ENCODE measurements at regions of chrX and their contacts with region 1.

Region 1: GRCh38 chrX:154458114-154458953 is at the start of gene PLXNA3:
- DNase-seq: peak; percentile 86
- ATAC-seq: peak; percentile 79
- H3K4me3 ChIP-seq: peak within 1 kb of the TSS; percentile 23 to 69 (median 61)
- H3K4me3 Mint-ChIP-seq: peak within 1 kb of the TSS; percentile 95
- H3K27ac ChIP-seq: peak within 1 kb of the TSS; percentile 24 to 66
- H3K27ac Mint-ChIP-seq: peak within 1 kb of the TSS; percentile 96
- H3K4me1 ChIP-seq: peaks cover 6 to 18% of the 10 kb centered on the region in 2 donors
- H3K4me1 Mint-ChIP-seq: peaks cover 14% of the 10 kb centered on the region
- H3K27me3 ChIP-seq: no peaks in the 10 kb centered on the region
- H3K27me3 Mint-ChIP-seq: no peaks in the 10 kb centered on the region
- CTCF ChIP-seq: no peak
- total RNA-seq, gene PLXNA3: 114 and 120 TPM in 2 replicates

Region 2: DNA sequence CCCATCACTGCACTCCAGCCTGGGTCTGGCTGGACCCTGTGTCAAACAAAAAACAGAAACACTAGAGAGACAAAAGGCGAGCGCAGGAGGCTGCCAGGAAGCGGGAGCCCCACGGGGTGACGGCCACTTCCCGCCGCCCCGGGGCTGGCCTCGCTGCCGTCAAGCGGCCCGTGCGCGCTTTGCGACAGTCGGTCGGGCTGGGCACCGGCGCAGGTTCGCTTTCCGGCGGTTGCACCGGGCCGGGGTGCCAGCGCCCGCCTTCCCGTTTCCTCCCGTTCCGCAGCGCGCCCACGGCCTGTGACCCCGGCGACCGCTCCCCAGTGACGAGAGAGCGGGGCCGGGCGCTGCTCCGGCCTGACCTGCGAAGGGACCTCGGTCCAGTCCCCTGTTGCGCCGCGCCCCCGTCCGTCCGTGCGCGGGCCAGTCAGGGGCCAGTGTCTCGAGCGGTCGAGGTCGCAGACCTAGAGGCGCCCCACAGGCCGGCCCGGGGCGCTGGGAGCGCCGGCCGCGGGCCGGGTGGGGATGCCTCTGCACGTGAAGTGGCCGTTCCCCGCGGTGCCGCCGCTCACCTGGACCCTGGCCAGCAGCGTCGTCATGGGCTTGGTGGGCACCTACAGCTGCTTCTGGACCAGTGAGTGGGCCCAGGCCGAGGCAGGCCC is 46.9 kb before region 1 on chrX and contains the start of gene TAFAZZIN:
- CTCF ChIA-PET with region 1: no interaction called
- POLR2A ChIA-PET with region 1: interaction called, 7 read pairs
- intact Hi-C with region 1: loop called (anchors 5 kb)
- DNase-seq: peak; percentile 77
- ATAC-seq: peak; percentile 66
- H3K4me3 ChIP-seq: peak within 1 kb of the TSS in 4 of 5 experiments; percentile 59 to 79 (median 70)
- H3K4me3 Mint-ChIP-seq: peak within 1 kb of the TSS; percentile 90
- H3K27ac ChIP-seq: peak within 1 kb of the TSS; percentile 73 to 79
- H3K27ac Mint-ChIP-seq: peak within 1 kb of the TSS; percentile 90
- H3K4me1 ChIP-seq: peaks cover 8 to 38% of the 10 kb centered on the region in 2 donors
- H3K4me1 Mint-ChIP-seq: peaks cover 31% of the 10 kb centered on the region
- H3K27me3 ChIP-seq: no peaks in the 10 kb centered on the region
- H3K27me3 Mint-ChIP-seq: no peaks in the 10 kb centered on the region
- CTCF ChIP-seq: no peak
- total RNA-seq, gene TAFAZZIN: 117 and 118 TPM in 2 replicates

Region 3: GRCh38 chrX:154428176-154429010 is 29.9 kb before region 1 on chrX and contains the start of gene ATP6AP1:
- CTCF ChIA-PET with region 1: no interaction called
- POLR2A ChIA-PET with region 1: no interaction called
- intact Hi-C with region 1: loop called (anchors 1 kb)
- DNase-seq: peak; percentile 89
- ATAC-seq: peak; percentile 97
- H3K4me3 ChIP-seq: peak within 1 kb of the TSS in 4 of 5 experiments; percentile 55 to 72 (median 63)
- H3K4me3 Mint-ChIP-seq: peak within 1 kb of the TSS; percentile 87
- H3K27ac ChIP-seq: peak within 1 kb of the TSS; percentile 50 to 72
- H3K27ac Mint-ChIP-seq: peak within 1 kb of the TSS; percentile 87
- H3K4me1 ChIP-seq: peaks cover 6 to 15% of the 10 kb centered on the region in 2 donors
- H3K4me1 Mint-ChIP-seq: peaks cover 23% of the 10 kb centered on the region
- H3K27me3 ChIP-seq: no peaks in the 10 kb centered on the region
- H3K27me3 Mint-ChIP-seq: no peaks in the 10 kb centered on the region
- CTCF ChIP-seq: no peak
- total RNA-seq, gene ATP6AP1: 55.6 and 57.7 TPM in 2 replicates

Region 4: DNA sequence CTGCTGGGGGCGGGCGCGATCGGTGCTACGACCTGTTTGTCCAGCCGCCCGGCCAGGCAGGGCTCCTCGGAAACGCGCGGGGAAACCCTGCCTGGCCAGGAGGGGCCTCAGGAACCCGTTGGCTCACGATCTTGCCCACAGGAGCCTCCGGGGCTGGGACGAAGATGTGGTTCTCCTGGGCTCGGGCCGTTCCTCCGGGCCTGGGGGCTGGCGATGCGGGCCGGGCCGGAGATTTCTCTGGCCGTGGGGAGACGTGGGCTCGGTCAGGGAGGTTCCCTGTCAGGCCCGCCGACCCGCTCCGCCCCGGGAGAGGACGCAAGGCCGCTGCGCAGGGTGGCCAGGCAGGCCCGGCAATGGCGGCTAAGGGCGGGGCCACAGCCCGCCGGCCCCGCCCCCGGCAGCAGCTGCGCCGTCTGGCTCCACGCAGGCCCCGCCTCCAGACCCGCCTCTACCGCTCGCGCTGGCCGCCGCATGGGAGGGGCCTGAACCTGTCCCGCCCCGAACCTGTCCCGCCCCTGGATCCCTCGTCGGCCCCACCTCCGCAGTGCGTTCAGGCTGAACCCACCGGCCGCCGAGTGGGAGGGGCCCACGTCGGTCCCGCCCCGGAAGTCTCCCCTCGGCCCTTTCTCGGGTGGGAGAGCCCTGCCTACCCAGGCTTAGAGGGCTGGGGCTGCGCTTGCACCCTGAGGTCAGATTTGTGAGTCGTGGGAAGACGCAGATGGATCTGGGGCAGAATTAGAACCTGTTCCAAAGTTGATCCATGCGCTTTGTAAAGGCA is 57.7 kb after region 1 on chrX and contains the start of gene FAM3A:
- CTCF ChIA-PET with region 1: no interaction called
- POLR2A ChIA-PET with region 1: no interaction called
- intact Hi-C with region 1: loop called (anchors 5 kb)
- DNase-seq: peak; percentile 89
- ATAC-seq: peak; percentile 97
- H3K4me3 ChIP-seq: peak within 1 kb of the TSS; percentile 36 to 75 (median 67)
- H3K4me3 Mint-ChIP-seq: peak within 1 kb of the TSS; percentile 89
- H3K27ac ChIP-seq: peak within 1 kb of the TSS; percentile 71 to 73
- H3K27ac Mint-ChIP-seq: peak within 1 kb of the TSS; percentile 94
- H3K4me1 ChIP-seq: peaks cover 4 to 22% of the 10 kb centered on the region in 2 donors
- H3K4me1 Mint-ChIP-seq: peaks cover 18% of the 10 kb centered on the region
- H3K27me3 ChIP-seq: no peaks in the 10 kb centered on the region
- H3K27me3 Mint-ChIP-seq: no peaks in the 10 kb centered on the region
- CTCF ChIP-seq: no peak
- total RNA-seq, gene FAM3A: 39.6 and 43.3 TPM in 2 replicates

Measured in B cell (primary cell).